ENCODE measurements at regions of chr1 and their contacts with region 1.

Region 1: GRCh38 chr1:53413175-53414001 is 45.8 kb upstream of the DMRTB1 start:
- DNase-seq: peak; percentile 63 to 86 (median 69)
- H3K4me3 ChIP-seq: peak overlapping the region in 1 of 2 donors; percentile 3
- H3K4me3 Mint-ChIP-seq: peak overlapping the region; percentile 11 to 78 (median 65)
- H3K27ac ChIP-seq: peak overlapping the region; percentile 63
- H3K27ac Mint-ChIP-seq: peak overlapping the region; percentile 91 to 99 (median 98)
- H3K4me1 ChIP-seq: peaks cover 79% of the 10 kb centered on the region
- H3K4me1 Mint-ChIP-seq: peaks cover 38 to 78% (median 59%) of the 10 kb centered on the region in 4 donors
- H3K27me3 ChIP-seq: no peaks in the 10 kb centered on the region
- H3K27me3 Mint-ChIP-seq: no peaks in the 10 kb centered on the region

Region 2: DNA sequence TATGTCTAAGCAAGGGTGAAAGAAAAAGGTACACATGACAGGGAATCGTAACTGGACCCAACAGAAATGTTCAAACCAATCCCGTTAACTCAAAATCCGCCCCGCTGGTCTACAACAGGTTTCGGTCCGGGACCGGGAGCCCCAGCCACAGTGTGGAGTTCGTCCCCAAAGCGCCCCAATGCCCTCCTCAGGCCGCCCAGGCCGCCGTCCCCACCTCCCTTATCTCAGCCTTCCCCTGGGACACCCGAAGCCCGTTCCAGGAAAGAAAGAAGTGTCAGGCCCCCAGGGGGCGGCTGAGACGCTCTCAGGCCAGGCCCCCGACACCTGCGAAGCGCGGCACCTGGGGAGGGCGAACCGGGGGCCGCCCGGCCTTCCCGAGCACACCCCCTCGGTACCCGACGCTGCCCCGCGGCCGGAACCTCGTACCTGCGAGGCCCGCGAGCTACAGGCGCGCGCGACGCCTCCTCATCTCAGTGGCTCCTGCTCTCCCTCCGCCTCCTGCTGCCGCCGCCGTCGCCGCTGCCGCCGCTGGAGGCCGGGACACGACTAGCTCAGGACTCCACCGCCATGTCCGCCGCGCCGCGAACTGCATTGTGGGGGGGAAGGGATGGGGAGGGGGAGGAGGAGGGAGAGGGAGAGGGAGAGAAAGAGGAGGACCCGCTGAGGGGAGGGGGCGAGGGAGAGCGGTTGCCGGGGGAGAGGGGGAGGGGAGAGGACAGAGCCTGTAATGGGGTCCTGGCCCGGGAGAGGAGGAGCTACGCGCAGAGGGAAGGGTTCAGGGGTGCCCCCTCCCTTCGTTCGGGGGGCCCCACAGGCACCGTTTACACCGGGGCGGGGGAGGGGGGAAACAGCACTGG is 860.7 kb before region 1 on chr1 and contains the start of gene TUT4:
- CTCF ChIA-PET with region 1: no interaction called
- POLR2A ChIA-PET with region 1: no interaction called
- intact Hi-C with region 1: loop called (anchors 5 kb)
- DNase-seq: peak; percentile 67 to 83 (median 73)
- H3K4me3 ChIP-seq: peak within 1 kb of the TSS; percentile 68 to 95
- H3K4me3 Mint-ChIP-seq: peak within 1 kb of the TSS in 7 of 8 donors; percentile 48 to 87 (median 77)
- H3K27ac ChIP-seq: peak within 1 kb of the TSS; percentile 92
- H3K27ac Mint-ChIP-seq: peak within 1 kb of the TSS; percentile 57 to 91 (median 83)
- H3K4me1 ChIP-seq: peaks cover 41% of the 10 kb centered on the region
- H3K4me1 Mint-ChIP-seq: peaks cover 25 to 41% (median 33%) of the 10 kb centered on the region in 4 donors
- H3K27me3 ChIP-seq: no peaks in the 10 kb centered on the region
- H3K27me3 Mint-ChIP-seq: no peaks in the 10 kb centered on the region
- total RNA-seq, gene TUT4: 151 to 159 TPM

Region 3: DNA sequence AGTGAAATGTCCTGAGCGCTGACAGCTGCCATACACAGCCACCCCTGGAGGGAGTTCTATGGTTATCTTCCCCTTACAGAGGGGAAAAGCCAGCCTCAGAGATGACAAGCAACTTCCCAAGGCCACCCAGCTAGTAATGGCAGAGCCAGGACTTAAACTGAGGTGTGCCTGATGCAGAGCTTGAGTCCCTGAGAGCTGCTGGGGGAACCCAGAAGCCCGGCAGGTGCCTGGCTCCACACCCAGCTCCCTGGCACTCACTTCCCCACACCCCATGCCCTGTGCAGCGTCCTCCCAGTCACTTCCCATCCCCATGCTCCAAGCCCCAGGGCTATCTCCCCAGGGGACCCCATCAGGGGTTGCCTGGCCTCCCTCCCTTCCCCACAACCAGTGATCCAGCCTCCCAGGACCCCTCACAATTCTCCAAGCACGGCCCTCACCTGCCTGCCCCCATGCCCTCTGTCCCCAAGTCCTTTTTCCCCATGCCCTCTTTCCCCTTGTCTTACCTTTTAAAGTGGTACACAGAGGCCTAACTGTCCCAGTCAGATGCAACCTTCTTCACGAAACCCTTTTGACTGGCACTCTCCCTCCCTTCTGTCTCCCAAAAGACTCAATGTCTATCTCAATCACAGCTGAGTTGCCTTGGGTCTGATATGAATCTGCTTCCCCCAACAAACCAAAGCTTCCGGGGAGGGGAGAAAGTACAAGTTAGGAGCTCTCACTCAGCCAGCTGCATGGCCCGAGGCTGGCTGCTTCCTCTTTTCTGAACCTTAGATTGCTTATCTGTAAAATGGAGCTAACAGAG is 45.7 kb before region 1 on chr1:
- CTCF ChIA-PET with region 1: interaction called, 5 read pairs
- POLR2A ChIA-PET with region 1: interaction called, 23 read pairs
- intact Hi-C with region 1: no loop called
- DNase-seq: peak; percentile 27 to 57 (median 41)
- H3K4me3 ChIP-seq: peak overlapping the region in 1 of 2 donors; percentile 39
- H3K4me3 Mint-ChIP-seq: peak overlapping the region; percentile 87 to 96 (median 91)
- H3K27ac ChIP-seq: peak overlapping the region; percentile 10
- H3K27ac Mint-ChIP-seq: peak overlapping the region; percentile 61 to 98 (median 93)
- H3K4me1 ChIP-seq: peaks cover 28% of the 10 kb centered on the region
- H3K4me1 Mint-ChIP-seq: peaks cover 11 to 31% (median 22%) of the 10 kb centered on the region in 4 donors
- H3K27me3 ChIP-seq: no peaks in the 10 kb centered on the region
- H3K27me3 Mint-ChIP-seq: no peaks in the 10 kb centered on the region

Region 4: DNA sequence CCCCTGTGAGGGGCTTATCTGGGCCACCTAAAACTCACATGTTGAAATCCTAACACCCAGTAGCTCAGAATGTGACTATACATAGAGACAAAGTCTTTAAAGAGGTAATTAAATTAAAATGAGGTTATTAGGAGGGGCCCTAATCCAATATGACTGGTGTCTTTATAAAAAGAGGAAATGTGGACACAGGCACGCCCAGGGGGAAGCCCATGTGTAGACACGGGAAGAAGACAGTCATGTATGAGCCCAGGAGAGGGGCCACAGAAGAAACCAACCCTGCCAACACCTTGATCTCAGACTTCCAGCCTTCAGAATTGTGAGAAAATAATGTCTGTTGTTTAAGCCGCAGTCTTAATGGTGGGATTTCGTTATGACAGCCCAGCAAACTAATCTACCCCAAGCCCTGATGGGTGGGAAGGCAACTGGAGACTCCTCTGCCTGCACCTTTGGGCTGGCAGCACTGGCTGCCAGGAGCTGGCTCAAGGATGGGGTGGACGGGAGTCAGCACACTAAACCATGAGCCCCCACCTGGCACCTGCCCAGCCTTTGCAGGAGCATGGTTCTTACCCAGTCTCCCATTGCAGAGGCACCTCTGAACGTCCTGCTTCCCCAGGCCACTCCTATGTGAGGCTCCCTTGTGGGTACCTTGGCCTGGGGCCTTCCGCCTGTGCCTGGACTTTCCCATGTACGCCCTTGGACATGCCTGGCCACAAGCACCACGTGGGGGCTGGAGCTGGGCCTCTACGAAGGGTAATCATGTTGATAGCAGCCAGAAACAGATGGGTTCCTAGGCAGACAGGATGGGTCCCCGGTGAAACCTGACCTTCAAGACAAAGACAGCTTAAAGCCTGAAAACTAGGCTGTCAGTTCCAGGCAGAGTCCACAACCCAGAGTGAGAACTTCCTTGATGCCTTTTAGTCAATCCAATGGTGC is 11.3 kb before region 1 on chr1:
- CTCF ChIA-PET with region 1: interaction called, 3 read pairs
- POLR2A ChIA-PET with region 1: interaction called, 39 read pairs
- intact Hi-C with region 1: no loop called
- DNase-seq: no peak
- H3K4me3 ChIP-seq: no peak overlapping the region
- H3K4me3 Mint-ChIP-seq: no peak overlapping the region
- H3K27ac ChIP-seq: no peak overlapping the region
- H3K27ac Mint-ChIP-seq: peak overlapping the region in 1 of 7 donors; percentile 82
- H3K4me1 ChIP-seq: no peaks in the 10 kb centered on the region
- H3K4me1 Mint-ChIP-seq: no peaks in the 10 kb centered on the region
- H3K27me3 ChIP-seq: no peaks in the 10 kb centered on the region
- H3K27me3 Mint-ChIP-seq: no peaks in the 10 kb centered on the region

Region 5: GRCh38 chr1:53465080-53465479 is 51.7 kb after region 1 on chr1:
- CTCF ChIA-PET with region 1: no interaction called
- POLR2A ChIA-PET with region 1: interaction called, 7 read pairs
- intact Hi-C with region 1: loop called (anchors 5 kb)
- DNase-seq: no peak
- H3K4me3 ChIP-seq: no peak overlapping the region
- H3K4me3 Mint-ChIP-seq: no peak overlapping the region
- H3K27ac ChIP-seq: no peak overlapping the region
- H3K27ac Mint-ChIP-seq: peak overlapping the region in 2 of 7 donors; percentile 7 to 41
- H3K4me1 ChIP-seq: no peaks in the 10 kb centered on the region
- H3K4me1 Mint-ChIP-seq: peaks cover 0 to 2% (median under 1%) of the 10 kb centered on the region in 4 donors
- H3K27me3 ChIP-seq: no peaks in the 10 kb centered on the region
- H3K27me3 Mint-ChIP-seq: no peaks in the 10 kb centered on the region

Region 6: GRCh38 chr1:54047384-54048305 is 634.3 kb after region 1 on chr1:
- CTCF ChIA-PET with region 1: no interaction called
- POLR2A ChIA-PET with region 1: no interaction called
- intact Hi-C with region 1: no loop called
- DNase-seq: no peak
- H3K4me3 ChIP-seq: no peak overlapping the region
- H3K4me3 Mint-ChIP-seq: peak overlapping the region in 5 of 8 donors; percentile 9 to 57 (median 25)
- H3K27ac ChIP-seq: no peak overlapping the region
- H3K27ac Mint-ChIP-seq: peak overlapping the region in 5 of 7 donors; percentile 16 to 64 (median 54)
- H3K4me1 ChIP-seq: peaks cover 57% of the 10 kb centered on the region
- H3K4me1 Mint-ChIP-seq: peaks cover 23 to 47% (median 39%) of the 10 kb centered on the region in 4 donors
- H3K27me3 ChIP-seq: no peaks in the 10 kb centered on the region
- H3K27me3 Mint-ChIP-seq: no peaks in the 10 kb centered on the region

Measured in CD4-positive, alpha-beta memory T cell (primary cell).